Activated CD4-positive, alpha-beta T cell treated with anti-CD3 and anti-CD28 coated beads, Interleukin-2, amount 10 ng/mL, durations not matched to agents 24 days and 14 days (primary cell): ENCODE measurements at regions of chr12 and their contacts with region 1.

Region 1: GRCh38 chr12:44930972-44931600 is 55.0 kb upstream of the NELL2 start:
- DNase-seq: peak; percentile 63
- H3K4me3 Mint-ChIP-seq: no peak overlapping the region
- H3K27ac Mint-ChIP-seq: no peak overlapping the region
- H3K4me1 Mint-ChIP-seq: no peaks in the 10 kb centered on the region
- H3K27me3 Mint-ChIP-seq: peaks cover 7% of the 10 kb centered on the region

Region 2: GRCh38 chr12:44015335-44015941 is 915.6 kb before region 1 on chr12:
- intact Hi-C with region 1: loop called (anchors 1 kb)
- DNase-seq: peak; percentile 66
- H3K4me3 Mint-ChIP-seq: no peak overlapping the region
- H3K27ac Mint-ChIP-seq: no peak overlapping the region
- H3K4me1 Mint-ChIP-seq: no peaks in the 10 kb centered on the region
- H3K27me3 Mint-ChIP-seq: peaks cover 3% of the 10 kb centered on the region

Region 3: GRCh38 chr12:44317651-44318126 is 613.4 kb before region 1 on chr12:
- intact Hi-C with region 1: loop called (anchors 2 kb)
- DNase-seq: no peak
- H3K4me3 Mint-ChIP-seq: no peak overlapping the region
- H3K27ac Mint-ChIP-seq: no peak overlapping the region
- H3K4me1 Mint-ChIP-seq: no peaks in the 10 kb centered on the region
- H3K27me3 Mint-ChIP-seq: peaks cover 3% of the 10 kb centered on the region

Region 4: DNA sequence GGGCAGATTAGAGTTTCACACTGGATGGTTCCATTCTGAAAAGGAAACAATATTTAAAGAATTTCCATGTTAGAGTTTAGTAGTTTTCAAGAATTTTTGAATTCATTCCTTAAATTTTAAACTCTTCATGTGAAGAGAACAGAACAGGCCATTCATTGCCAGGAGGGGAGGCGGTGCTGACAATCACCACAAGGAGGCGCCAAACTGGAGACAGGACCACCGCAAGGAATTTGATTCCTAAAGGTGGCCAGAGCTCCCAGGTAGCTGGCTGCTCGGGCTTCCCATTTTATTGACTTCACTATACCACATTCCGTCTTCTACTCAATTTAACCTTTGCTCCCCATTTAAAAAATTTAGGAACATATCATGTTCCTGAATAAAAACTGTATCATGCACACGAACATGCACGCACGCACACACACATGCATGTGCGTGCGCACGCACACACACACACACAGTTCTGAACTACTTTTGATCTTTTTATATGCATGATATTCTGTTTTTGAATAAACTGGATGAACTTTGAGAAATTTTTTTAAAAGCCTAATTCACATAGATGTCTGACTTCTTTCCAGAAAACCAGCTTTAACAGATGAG is 156.2 kb before region 1 on chr12:
- intact Hi-C with region 1: loop called (anchors 1 kb)
- DNase-seq: peak; percentile 86
- H3K4me3 Mint-ChIP-seq: no peak overlapping the region
- H3K27ac Mint-ChIP-seq: no peak overlapping the region
- H3K4me1 Mint-ChIP-seq: peaks cover 5% of the 10 kb centered on the region
- H3K27me3 Mint-ChIP-seq: no peaks in the 10 kb centered on the region

Region 5: GRCh38 chr12:44812062-44812461 is 119.0 kb before region 1 on chr12:
- intact Hi-C with region 1: loop called (anchors 1 kb)
- DNase-seq: peak; percentile 87
- H3K4me3 Mint-ChIP-seq: no peak overlapping the region
- H3K27ac Mint-ChIP-seq: no peak overlapping the region
- H3K4me1 Mint-ChIP-seq: peaks cover 21% of the 10 kb centered on the region
- H3K27me3 Mint-ChIP-seq: no peaks in the 10 kb centered on the region

Region 6: DNA sequence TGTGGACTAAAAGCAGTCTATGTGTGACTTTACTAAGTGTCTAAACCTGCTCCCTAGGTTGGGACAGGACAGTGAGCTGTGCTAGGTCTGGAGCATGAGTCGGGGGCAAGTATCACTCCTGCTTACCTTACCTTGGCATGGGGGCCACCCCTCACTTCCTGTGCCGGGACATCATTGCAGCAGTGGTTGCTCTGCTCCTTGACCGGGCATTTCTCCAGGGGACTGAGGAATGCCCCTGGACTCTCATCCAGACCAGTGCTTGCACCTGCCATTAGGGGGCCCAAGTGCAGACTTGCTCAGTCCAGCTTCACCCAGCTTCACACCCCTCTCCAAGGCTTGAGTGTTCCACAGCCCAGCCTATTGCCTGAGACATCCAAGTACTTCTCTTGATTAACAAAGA is 29.8 kb after region 1 on chr12:
- intact Hi-C with region 1: no loop called
- DNase-seq: no peak
- H3K4me3 Mint-ChIP-seq: no peak overlapping the region
- H3K27ac Mint-ChIP-seq: no peak overlapping the region
- H3K4me1 Mint-ChIP-seq: no peaks in the 10 kb centered on the region
- H3K27me3 Mint-ChIP-seq: peaks cover 9% of the 10 kb centered on the region

Region 7: DNA sequence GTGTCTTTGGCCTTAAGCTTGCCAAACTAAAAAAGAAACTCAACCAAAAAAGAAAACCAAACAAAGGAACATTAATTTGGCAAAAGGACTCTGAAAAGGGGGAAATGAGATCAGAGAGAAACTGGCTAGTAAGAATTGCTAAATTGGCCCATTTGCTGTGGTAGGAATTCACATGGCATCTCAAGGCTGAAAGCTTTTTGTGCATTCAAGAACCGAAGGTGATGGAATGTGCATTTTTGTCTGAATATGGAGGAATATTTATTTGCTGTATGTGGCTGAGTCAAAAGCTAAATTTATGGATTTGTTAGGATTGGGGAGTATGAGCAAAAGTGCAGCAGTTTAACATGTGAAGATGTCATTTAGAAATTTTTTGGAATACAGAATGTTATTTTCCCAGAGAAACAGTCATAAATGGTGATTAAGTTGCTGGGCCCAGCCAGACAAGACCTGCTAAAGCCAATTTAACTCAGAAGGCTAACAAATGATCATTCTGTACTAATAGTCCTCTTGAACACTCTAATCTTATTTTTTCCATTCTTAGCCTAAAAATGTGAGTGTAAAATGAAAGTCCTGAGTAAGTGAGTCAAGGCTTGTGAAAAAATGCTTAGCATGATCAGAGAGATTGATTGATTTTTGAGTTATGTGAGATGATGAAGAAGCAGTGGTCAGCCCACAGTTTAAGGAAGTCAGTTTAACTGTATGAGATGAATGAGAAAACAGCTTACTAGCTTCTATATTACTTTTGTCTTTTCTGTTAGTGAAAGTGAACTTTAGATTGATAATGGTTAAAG is 378.9 kb after region 1 on chr12:
- intact Hi-C with region 1: no loop called
- DNase-seq: no peak
- H3K4me3 Mint-ChIP-seq: no peak overlapping the region
- H3K27ac Mint-ChIP-seq: no peak overlapping the region
- H3K4me1 Mint-ChIP-seq: peaks cover 3% of the 10 kb centered on the region
- H3K27me3 Mint-ChIP-seq: no peaks in the 10 kb centered on the region